ENCODE measurements at regions of chr7 and their contacts with region 1.

Region 1: GRCh38 chr7:542713-543500 is 23.3 kb upstream of the PDGFA start:
- DNase-seq: peak in 1 of 2 donors; percentile 62
- ATAC-seq: peak in 3 of 4 donors; percentile 21 to 43 (median 34)
- H3K4me3 ChIP-seq: no peak overlapping the region
- H3K27ac ChIP-seq: no peak overlapping the region
- H3K4me1 ChIP-seq: no peaks in the 10 kb centered on the region
- H3K27me3 ChIP-seq: peaks cover 0 to 9% (median 0%) of the 10 kb centered on the region in 3 donors
- CTCF ChIP-seq: no peak

Region 2: DNA sequence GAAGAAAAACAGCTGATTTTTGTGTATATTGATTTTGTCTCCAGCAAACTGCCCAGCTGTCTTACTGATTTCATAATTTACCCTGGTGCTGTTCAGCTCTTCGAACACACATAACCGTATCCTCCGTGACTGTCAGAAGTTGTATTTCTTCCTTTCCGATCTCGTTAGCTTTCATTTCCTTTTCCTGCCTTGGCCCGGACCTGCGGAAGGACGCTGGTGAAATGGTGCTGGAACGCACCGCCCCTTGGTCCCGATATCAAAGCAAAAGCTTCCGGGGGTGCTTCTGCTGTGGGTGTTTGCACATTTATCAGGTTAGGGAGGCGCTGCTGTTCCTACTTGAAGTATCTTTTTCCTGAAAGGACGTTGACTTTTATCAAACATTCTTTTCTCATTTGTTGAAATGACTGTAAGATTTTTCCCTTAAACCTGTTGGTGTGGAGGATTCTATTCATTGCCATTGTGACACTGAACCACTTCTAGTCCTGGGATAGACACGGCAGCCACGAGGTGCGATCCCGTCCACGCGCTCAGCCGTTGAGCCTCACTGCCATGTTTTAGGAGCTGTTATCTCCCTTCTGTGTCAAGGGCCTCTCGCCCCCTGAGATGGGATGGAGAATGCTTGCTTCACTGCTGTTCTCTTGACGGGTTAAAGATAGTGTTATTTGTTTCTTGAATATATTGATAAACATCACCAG is 180.4 kb before region 1 on chr7:
- intact Hi-C with region 1: no loop called
- DNase-seq: peak; percentile 14 to 49
- ATAC-seq: no peak
- H3K4me3 ChIP-seq: no peak overlapping the region
- H3K27ac ChIP-seq: no peak overlapping the region
- H3K4me1 ChIP-seq: no peaks in the 10 kb centered on the region
- H3K27me3 ChIP-seq: peaks cover 0 to 67% (median 15%) of the 10 kb centered on the region in 3 donors
- CTCF ChIP-seq: no peak

Region 3: DNA sequence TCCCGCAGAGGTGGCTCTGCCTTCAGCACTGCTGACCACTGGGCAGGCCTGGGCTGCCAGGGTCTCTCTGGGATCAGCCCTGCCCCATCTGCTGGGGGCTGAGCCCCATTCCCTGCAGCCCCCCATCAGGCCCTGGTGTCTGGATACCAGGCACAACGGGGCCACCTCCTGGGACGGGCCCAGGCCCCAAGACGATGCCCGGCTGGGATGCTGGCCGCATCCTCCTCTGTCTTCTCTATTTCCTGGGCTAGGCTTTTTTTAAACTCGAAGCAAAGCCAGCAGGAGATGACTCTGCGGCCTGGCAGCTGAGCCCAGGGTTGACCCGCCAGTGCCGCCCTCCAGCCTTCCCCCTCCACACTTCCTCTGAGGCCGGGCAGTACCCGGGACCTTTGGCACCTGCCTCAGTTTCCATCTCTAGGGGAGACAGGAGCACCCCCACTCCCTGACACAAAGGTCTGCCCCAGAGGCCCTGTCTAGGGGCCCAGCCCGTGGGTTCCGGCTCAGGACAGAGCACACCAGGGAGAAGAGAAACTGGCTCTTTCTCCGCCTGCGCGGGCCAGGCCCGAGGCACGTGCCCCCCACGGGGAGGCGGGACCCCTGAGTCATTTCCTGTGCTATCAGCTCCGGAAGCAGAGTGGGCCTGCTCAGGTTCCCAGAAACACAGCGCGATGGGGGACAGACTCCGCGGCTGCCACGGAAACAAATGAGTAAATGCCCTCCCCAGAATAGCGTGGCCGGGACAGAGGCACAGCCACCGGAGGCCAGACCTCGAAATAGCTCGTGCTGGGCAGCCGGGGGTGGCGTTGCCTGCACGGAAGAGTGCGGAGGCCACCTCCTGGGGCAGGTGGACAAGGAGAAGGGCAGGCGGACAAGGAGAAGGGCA is 61.3 kb after region 1 on chr7:
- intact Hi-C with region 1: loop called in 1 of 2 experiments (anchors 5 kb)
- DNase-seq: peak; percentile 80 to 88
- ATAC-seq: peak; percentile 71 to 92 (median 85)
- H3K4me3 ChIP-seq: no peak overlapping the region
- H3K27ac ChIP-seq: peak overlapping the region; percentile 81
- H3K4me1 ChIP-seq: peaks cover 3% of the 10 kb centered on the region
- H3K27me3 ChIP-seq: peaks cover 0 to 10% (median 0%) of the 10 kb centered on the region in 3 donors
- CTCF ChIP-seq: no peak

Region 4: GRCh38 chr7:621572-622285 is 78.8 kb after region 1 on chr7:
- intact Hi-C with region 1: no loop called
- DNase-seq: peak in 1 of 2 donors; percentile 15
- ATAC-seq: no peak
- H3K4me3 ChIP-seq: no peak overlapping the region
- H3K27ac ChIP-seq: no peak overlapping the region
- H3K4me1 ChIP-seq: no peaks in the 10 kb centered on the region
- H3K27me3 ChIP-seq: peaks cover 0 to 3% (median 0%) of the 10 kb centered on the region in 3 donors
- CTCF ChIP-seq: no peak